ENCODE measurements at regions of chr10 and their contacts with region 1.

Region 1: GRCh38 chr10:95693668-95694534 is at the start of gene TCTN3:
- H3K4me3 Mint-ChIP-seq: peak within 1 kb of the TSS; percentile 95
- H3K27ac Mint-ChIP-seq: peak within 1 kb of the TSS; percentile 87
- H3K4me1 Mint-ChIP-seq: peaks cover 65% of the 10 kb centered on the region
- H3K27me3 Mint-ChIP-seq: no peaks in the 10 kb centered on the region

Region 2: GRCh38 chr10:95841661-95842498 is 148.0 kb after region 1 on chr10:
- intact Hi-C with region 1: loop called (anchors 1 kb)
- H3K4me3 Mint-ChIP-seq: no peak overlapping the region
- H3K27ac Mint-ChIP-seq: peak overlapping the region; percentile 71
- H3K4me1 Mint-ChIP-seq: peaks cover 43% of the 10 kb centered on the region
- H3K27me3 Mint-ChIP-seq: no peaks in the 10 kb centered on the region

Region 3: DNA sequence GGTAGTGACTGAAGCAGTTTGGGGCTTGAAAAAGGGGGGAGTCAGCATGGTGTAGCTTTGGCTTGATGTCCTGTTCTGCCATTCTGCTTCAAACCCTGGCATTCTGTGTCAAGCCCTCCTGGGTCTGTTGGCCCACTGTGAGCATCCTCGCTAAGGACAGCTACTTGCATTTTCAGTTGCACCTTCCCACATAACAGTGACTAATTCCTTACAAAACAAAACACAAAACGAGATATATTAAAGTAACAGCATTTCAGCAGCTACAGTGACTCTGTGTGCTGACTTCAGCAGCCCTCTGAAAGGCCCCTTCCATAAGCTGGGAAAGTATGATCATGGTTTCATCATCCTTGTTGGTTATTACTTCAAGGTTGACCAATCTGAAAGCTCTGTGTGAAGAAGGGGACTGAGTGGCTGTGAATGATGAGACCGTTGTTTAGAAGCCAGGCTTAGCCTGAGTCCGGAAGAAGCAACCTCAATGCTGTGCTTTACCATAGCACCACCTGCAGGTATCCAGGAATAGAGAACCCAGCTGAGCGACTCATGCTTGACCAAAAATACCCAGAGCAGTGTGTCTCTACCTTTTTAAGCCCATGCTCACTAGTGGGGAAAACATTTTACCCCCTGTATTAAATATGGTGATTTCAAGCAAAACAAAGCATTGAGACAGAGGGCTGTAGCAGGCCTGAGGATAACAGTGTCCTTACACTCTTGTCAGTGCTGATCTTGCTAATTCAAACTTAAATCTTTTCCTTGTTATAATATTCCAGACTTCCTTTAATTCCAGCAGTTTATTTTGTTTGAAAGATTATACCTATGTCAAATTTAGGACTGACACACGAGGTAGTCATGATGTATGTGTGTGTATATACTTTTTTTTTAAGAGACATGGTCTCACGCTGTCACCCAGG is 171.3 kb after region 1 on chr10:
- intact Hi-C with region 1: loop called (anchors 1 kb)
- H3K4me3 Mint-ChIP-seq: no peak overlapping the region
- H3K27ac Mint-ChIP-seq: peak overlapping the region; percentile 0
- H3K4me1 Mint-ChIP-seq: no peaks in the 10 kb centered on the region
- H3K27me3 Mint-ChIP-seq: no peaks in the 10 kb centered on the region

Region 4: GRCh38 chr10:95963226-95963990 is 269.5 kb after region 1 on chr10:
- intact Hi-C with region 1: no loop called
- H3K4me3 Mint-ChIP-seq: no peak overlapping the region
- H3K27ac Mint-ChIP-seq: no peak overlapping the region
- H3K4me1 Mint-ChIP-seq: peaks cover 7% of the 10 kb centered on the region
- H3K27me3 Mint-ChIP-seq: no peaks in the 10 kb centered on the region

Region 5: GRCh38 chr10:96772194-96772593 is 1078.3 kb after region 1 on chr10:
- intact Hi-C with region 1: no loop called
- H3K4me3 Mint-ChIP-seq: no peak overlapping the region
- H3K27ac Mint-ChIP-seq: no peak overlapping the region
- H3K4me1 Mint-ChIP-seq: peaks cover 7% of the 10 kb centered on the region
- H3K27me3 Mint-ChIP-seq: no peaks in the 10 kb centered on the region